Esophagus muscularis mucosa (tissue), 4 donors: ENCODE measurements at regions of chr19 and their contacts with region 1.

Region 1: DNA sequence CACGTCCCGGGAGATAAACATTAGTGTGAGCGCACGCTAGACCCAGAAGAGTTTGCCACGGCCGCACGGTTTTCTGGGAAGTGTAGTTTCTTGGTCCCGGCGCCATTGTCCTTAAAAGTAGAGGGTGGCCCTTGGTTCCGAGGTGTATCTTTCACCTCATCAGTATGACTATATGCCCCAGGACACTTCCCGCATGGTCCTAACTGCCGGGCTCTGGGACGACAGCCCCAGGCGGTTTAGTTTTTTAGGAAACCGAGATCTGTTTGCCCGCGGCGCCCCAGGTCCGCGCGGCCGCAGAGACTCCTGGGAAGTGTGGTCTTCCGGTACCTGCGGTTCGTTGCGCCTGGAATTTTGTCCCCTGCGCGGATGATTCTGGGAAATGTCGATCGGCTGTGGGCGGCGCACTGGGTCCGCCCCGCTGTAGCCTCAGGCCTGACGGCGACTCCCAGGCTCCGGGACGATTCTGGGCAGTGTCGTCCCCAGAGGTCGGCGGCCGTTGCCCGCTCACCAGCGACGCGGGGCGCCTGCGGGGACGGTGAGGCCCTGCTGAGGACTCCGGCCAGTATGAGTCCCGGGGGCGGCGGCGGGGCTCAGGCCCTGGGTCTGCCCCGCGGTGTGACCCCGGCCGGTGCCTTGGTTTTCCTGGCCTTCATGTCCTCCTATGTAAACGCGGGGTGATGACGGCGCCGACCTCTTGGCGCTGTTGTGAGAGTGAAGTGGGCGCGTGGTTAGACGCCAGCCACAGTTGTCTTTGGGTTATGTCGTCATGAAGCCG is at the start of gene ZNF181:
- DNase-seq: peak; percentile 98
- H3K4me3 ChIP-seq: peak within 1 kb of the TSS; percentile 70 to 97 (median 80)
- H3K27ac ChIP-seq: peak within 1 kb of the TSS; percentile 93 to 99 (median 96)
- H3K4me1 ChIP-seq: peaks cover 19 to 41% (median 35%) of the 10 kb centered on the region in 4 donors
- H3K27me3 ChIP-seq: no peaks in the 10 kb centered on the region
- CTCF ChIP-seq: no peak
- EP300 ChIP-seq: peak; percentile 61
- POLR2A ChIP-seq: peak; percentile 77
- total RNA-seq, gene ZNF181: 22.6 to 31.6 (median 26.0) TPM

Region 2: GRCh38 chr19:34759218-34759917 is 25.4 kb after region 1 on chr19:
- intact Hi-C with region 1: no loop called
- DNase-seq: no peak
- H3K4me3 ChIP-seq: no peak overlapping the region
- H3K27ac ChIP-seq: no peak overlapping the region
- H3K4me1 ChIP-seq: no peaks in the 10 kb centered on the region
- H3K27me3 ChIP-seq: no peaks in the 10 kb centered on the region
- CTCF ChIP-seq: no peak
- EP300 ChIP-seq: no peak
- POLR2A ChIP-seq: no peak

Region 3: DNA sequence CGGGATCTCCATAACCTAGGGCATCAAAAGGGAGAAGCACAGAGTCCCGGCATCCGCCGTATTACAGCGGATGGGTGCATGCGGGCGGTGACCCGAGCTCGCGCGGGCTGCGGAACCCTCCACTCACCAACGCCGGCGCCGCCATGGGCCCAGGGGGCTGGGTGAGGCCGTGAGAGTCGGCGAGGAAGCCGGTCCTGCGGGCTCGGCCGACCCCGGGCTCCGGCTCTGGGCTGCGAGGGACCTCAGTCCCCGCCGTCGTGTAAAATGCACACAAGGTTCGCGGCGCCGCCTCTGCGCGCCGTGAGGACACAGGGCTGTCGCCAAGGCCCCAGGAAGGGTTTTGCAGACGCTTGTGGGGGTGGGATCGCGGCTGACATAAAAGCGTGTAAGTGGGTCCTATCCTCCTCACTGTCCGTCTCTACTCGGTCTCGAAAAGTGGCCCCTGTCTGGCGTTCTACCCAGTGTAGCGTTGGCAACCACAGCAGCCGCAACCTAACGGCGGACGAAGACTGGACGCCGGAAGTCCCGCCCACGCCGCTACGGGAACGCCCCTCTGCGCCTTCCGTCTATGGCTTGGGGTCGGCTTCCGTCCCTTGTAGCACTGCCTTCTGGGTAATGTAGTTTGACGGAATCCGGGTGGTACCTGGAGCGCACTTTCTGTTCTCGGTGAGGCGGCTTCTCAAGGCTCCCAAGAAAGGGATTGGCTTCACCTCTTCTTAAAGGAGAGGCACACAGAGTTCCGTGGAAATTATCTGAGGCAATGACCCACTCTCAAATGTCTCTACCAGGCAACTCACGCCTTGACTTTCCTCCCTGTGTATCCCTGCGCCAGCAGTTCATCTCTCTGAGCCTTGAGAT is 38.9 kb after region 1 on chr19 and contains the start of gene ZNF599:
- intact Hi-C with region 1: loop called (anchors 2 kb)
- DNase-seq: peak; percentile 98
- H3K4me3 ChIP-seq: peak within 1 kb of the TSS; percentile 73 to 96 (median 88)
- H3K27ac ChIP-seq: peak within 1 kb of the TSS; percentile 78 to 91 (median 84)
- H3K4me1 ChIP-seq: peaks cover 12 to 16% (median 14%) of the 10 kb centered on the region in 4 donors
- H3K27me3 ChIP-seq: no peaks in the 10 kb centered on the region
- CTCF ChIP-seq: no peak
- EP300 ChIP-seq: no peak
- POLR2A ChIP-seq: no peak
- total RNA-seq, gene ZNF599: 5.8 to 7.1 (median 6.7) TPM